Activated CD4-positive, alpha-beta memory T cell treated with anti-CD3 and anti-CD28 coated beads for 36 hours (primary cell): ENCODE measurements at regions of chr1 and their contacts with region 1.

Region 1: GRCh38 chr1:228810878-228811711 is 75.8 kb downstream of the RHOU start:
- DNase-seq: no peak
- H3K4me3 Mint-ChIP-seq: no peak overlapping the region
- H3K27ac Mint-ChIP-seq: no peak overlapping the region
- H3K4me1 Mint-ChIP-seq: peaks cover 34% of the 10 kb centered on the region
- H3K27me3 Mint-ChIP-seq: no peaks in the 10 kb centered on the region

Region 2: GRCh38 chr1:228825840-228826484 is 14.9 kb after region 1 on chr1:
- CTCF ChIA-PET with region 1: no interaction called
- POLR2A ChIA-PET with region 1: no interaction called
- intact Hi-C with region 1: loop called (anchors 1 kb)
- DNase-seq: no peak
- H3K4me3 Mint-ChIP-seq: no peak overlapping the region
- H3K27ac Mint-ChIP-seq: no peak overlapping the region
- H3K4me1 Mint-ChIP-seq: peaks cover 25% of the 10 kb centered on the region
- H3K27me3 Mint-ChIP-seq: peaks cover 4% of the 10 kb centered on the region